MCF 10A (cell line): ENCODE measurements at regions of chr3 and their contacts with region 1.

Region 1: DNA sequence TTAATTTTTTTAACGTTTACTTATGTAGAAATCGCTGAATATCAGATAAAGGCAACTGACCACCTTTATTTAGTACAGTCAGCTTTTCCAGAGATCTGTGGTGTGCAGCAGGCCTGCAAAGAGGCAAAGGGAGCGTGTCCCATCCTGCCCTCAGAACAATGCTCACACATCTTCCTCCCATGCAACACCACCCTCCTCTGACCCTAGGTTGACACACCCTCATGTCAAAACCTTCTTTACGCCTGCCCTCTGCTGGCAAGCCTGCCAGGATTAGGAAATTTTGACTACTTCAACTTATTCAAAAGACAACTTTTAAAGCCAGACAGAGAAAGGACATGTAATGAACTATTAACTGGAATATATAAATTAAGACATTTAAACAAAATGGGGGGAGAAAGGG is 513.7 kb downstream of the FOXP1 start:
- DNase-seq: peak; percentile 93
- H3K4me3 Mint-ChIP-seq: peak overlapping the region; percentile 48
- H3K27ac Mint-ChIP-seq: peak overlapping the region; percentile 10
- H3K4me1 Mint-ChIP-seq: peaks cover 25% of the 10 kb centered on the region
- H3K27me3 Mint-ChIP-seq: no peaks in the 10 kb centered on the region
- CTCF ChIP-seq: peak; percentile 71

Region 2: GRCh38 chr3:70550723-70551319 is 519.0 kb before region 1 on chr3:
- CTCF ChIA-PET with region 1: no interaction called
- POLR2A ChIA-PET with region 1: no interaction called
- intact Hi-C with region 1: loop called (anchors 5 kb)
- DNase-seq: peak; percentile 71
- H3K4me3 Mint-ChIP-seq: no peak overlapping the region
- H3K27ac Mint-ChIP-seq: no peak overlapping the region
- H3K4me1 Mint-ChIP-seq: no peaks in the 10 kb centered on the region
- H3K27me3 Mint-ChIP-seq: peaks cover 97% of the 10 kb centered on the region
- CTCF ChIP-seq: peak; percentile 72

Region 3: DNA sequence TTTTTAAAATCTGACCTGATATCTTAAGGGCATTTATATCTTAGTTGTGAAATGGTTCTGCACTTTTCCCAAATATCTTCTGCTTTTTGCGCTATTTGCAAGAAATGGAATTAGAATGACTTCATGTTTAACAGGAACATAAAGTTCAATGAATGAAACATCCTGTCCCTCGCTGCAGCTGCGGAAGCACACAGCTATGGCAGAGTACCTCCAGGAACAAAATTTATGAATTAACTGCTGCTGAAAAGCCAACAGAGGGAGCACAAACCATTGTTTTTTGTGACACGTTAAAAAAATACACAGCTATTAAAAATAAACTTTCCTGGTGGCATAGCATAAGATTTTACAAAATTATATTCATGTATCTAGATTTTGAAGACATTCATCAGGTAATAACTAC is 353.0 kb before region 1 on chr3:
- CTCF ChIA-PET with region 1: interaction called, 4 read pairs
- POLR2A ChIA-PET with region 1: no interaction called
- intact Hi-C with region 1: loop called (anchors 1 kb)
- DNase-seq: peak; percentile 28
- H3K4me3 Mint-ChIP-seq: no peak overlapping the region
- H3K27ac Mint-ChIP-seq: no peak overlapping the region
- H3K4me1 Mint-ChIP-seq: no peaks in the 10 kb centered on the region
- H3K27me3 Mint-ChIP-seq: peaks cover 77% of the 10 kb centered on the region
- CTCF ChIP-seq: peak; percentile 34

Region 4: DNA sequence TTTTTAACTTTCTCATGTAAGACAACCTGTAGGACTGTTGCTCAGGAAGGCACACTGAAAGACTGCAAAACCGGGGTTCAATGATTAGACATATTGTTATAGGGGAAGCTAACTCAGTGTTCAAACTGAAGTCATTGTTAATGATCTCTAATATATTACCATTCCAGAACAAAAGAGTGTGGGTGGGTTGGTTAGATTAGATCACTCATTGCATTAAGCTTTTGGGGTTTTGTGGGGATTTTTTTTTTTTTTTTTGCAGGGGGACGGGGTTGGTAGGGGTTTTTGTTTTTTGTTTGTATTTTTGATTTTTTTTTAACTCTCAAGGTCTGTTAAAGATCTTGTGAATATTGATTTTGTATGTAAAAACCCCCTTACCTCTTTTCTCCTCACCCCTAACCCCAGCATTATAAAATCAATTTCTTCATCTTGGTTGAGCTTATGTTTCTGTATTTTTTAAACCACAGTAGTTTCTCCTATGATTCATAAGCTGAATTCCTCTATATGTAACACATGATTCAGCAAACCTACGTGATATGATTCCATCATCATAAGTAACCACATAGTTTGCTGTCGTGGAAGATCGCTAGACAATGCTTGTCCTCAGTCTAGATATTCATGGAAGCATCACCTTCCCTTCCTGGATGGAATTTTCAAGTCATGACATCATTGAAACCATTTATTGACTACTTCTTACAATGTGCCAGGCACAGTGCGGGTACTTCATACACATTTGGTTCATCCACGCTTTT is 213.2 kb before region 1 on chr3:
- CTCF ChIA-PET with region 1: no interaction called
- POLR2A ChIA-PET with region 1: no interaction called
- intact Hi-C with region 1: loop called (anchors 5 kb)
- DNase-seq: peak; percentile 68
- H3K4me3 Mint-ChIP-seq: no peak overlapping the region
- H3K27ac Mint-ChIP-seq: peak overlapping the region; percentile 7
- H3K4me1 Mint-ChIP-seq: peaks cover 16% of the 10 kb centered on the region
- H3K27me3 Mint-ChIP-seq: no peaks in the 10 kb centered on the region
- CTCF ChIP-seq: no peak

Region 5: GRCh38 chr3:71006810-71007785 is 62.7 kb before region 1 on chr3:
- CTCF ChIA-PET with region 1: interaction called, 59 read pairs
- POLR2A ChIA-PET with region 1: interaction called, 32 read pairs
- intact Hi-C with region 1: loop called (anchors 1 kb)
- DNase-seq: peak; percentile 48
- H3K4me3 Mint-ChIP-seq: no peak overlapping the region
- H3K27ac Mint-ChIP-seq: peak overlapping the region; percentile 63
- H3K4me1 Mint-ChIP-seq: peaks cover 15% of the 10 kb centered on the region
- H3K27me3 Mint-ChIP-seq: no peaks in the 10 kb centered on the region
- CTCF ChIP-seq: peak; percentile 61

Region 6: GRCh38 chr3:71057526-71057894 is 12.3 kb before region 1 on chr3:
- CTCF ChIA-PET with region 1: interaction called, 15 read pairs
- POLR2A ChIA-PET with region 1: interaction called, 64 read pairs
- intact Hi-C with region 1: no loop called
- DNase-seq: peak; percentile 66
- H3K4me3 Mint-ChIP-seq: peak overlapping the region; percentile 63
- H3K27ac Mint-ChIP-seq: peak overlapping the region; percentile 94
- H3K4me1 Mint-ChIP-seq: peaks cover 72% of the 10 kb centered on the region
- H3K27me3 Mint-ChIP-seq: no peaks in the 10 kb centered on the region
- CTCF ChIP-seq: no peak

Region 7: DNA sequence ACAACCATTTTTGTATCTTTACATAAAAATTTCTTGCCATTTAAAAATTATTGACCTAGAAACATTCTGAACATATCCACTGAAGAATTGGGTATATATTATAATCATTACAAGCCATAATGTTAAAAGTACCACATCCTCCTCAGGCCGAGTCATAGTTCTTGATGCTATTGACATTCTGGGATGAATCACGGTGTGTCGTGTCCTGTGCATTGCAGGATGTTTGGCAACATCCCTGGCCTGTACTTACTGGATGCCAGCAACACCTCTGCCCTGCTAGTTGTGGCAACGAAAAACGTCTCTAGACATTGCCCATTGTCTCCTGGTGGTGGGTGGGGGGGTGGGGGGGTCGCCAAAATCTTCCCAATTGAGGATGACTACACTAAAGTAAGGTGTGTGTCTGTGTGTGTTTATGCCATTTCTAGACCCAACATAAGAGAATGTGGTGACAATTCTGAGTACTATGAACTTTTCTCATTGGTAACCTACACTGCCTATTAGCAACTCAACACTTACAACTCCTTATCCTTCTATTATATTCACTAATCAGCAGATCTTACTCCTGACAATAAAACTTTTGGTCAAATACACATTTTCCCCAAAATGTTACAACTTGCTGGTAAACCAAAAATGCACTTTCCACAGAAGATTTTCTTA is 42.1 kb after region 1 on chr3:
- CTCF ChIA-PET with region 1: interaction called, 4 read pairs
- POLR2A ChIA-PET with region 1: no interaction called
- intact Hi-C with region 1: loop called (anchors 2 kb)
- DNase-seq: peak; percentile 91
- H3K4me3 Mint-ChIP-seq: no peak overlapping the region
- H3K27ac Mint-ChIP-seq: peak overlapping the region; percentile 84
- H3K4me1 Mint-ChIP-seq: peaks cover 13% of the 10 kb centered on the region
- H3K27me3 Mint-ChIP-seq: no peaks in the 10 kb centered on the region
- CTCF ChIP-seq: no peak